HCT116 (cell line): ENCODE measurements at regions of chr3 and their contacts with region 1.

Region 1: GRCh38 chr3:54146506-54147239 is 24.3 kb downstream of the CACNA2D3 start:
- DNase-seq: peak; percentile 4
- ATAC-seq: peak; percentile 99
- H3K4me3 ChIP-seq: no peak overlapping the region
- H3K27ac ChIP-seq: no peak overlapping the region
- H3K4me1 ChIP-seq: no peaks in the 10 kb centered on the region
- H3K27me3 ChIP-seq: peaks cover 28% of the 10 kb centered on the region
- CTCF ChIP-seq: peak; percentile 36 to 70 (median 66); a peak in 4 of 6 replicates
- POLR2A ChIP-seq: no peak
- RAD21 ChIP-seq: peak; percentile 77

Region 2: GRCh38 chr3:54294214-54294613 is 147.5 kb after region 1 on chr3:
- CTCF ChIA-PET with region 1: interaction called, 5 read pairs
- POLR2A ChIA-PET with region 1: no interaction called
- RAD21 ChIA-PET with region 1: no interaction called
- intact Hi-C with region 1: loop called (anchors 1 kb)
- DNase-seq: no peak
- ATAC-seq: no peak
- H3K4me3 ChIP-seq: no peak overlapping the region
- H3K27ac ChIP-seq: no peak overlapping the region
- H3K4me1 ChIP-seq: no peaks in the 10 kb centered on the region
- H3K27me3 ChIP-seq: peaks cover 33% of the 10 kb centered on the region
- CTCF ChIP-seq: peak in 1 of 3 experiments; percentile 32; a peak in 1 of 6 replicates
- POLR2A ChIP-seq: no peak
- RAD21 ChIP-seq: no peak

Region 3: DNA sequence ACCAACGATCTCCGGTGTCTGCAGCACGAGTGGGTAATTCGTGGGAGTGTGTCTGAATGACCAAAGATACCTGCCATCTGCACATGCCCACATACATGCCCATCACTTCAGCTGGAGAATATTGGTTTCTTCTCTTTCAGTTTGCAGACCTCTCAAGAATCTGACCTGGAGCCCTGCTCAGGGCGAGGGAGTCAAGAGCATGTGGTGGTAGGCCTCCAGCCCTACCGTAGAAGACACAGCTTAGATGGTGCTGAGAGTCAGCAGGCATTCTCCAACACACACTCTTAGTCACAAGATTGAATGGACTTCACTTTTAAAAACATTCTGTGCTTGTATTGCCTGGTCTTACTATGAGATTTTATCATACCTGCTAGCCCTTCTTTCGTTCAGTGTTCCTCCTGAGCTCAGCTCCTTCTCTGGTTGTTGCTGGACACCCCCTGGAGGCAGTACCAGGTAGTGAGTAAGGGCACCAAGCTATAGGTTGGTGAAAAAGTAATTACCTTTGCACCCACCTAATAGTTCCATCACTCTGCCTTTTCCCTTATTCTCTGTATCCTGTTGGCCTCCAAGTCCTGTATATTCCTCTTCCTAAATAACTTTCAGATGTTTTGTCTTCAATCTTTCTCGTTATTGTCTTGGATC is 227.7 kb after region 1 on chr3:
- CTCF ChIA-PET with region 1: interaction called, 19 read pairs
- POLR2A ChIA-PET with region 1: no interaction called
- RAD21 ChIA-PET with region 1: no interaction called
- intact Hi-C with region 1: loop called (anchors 1 kb)
- DNase-seq: no peak
- ATAC-seq: peak; percentile 77
- H3K4me3 ChIP-seq: no peak overlapping the region
- H3K27ac ChIP-seq: no peak overlapping the region
- H3K4me1 ChIP-seq: no peaks in the 10 kb centered on the region
- H3K27me3 ChIP-seq: 0 out of 2 replicates have a peak, but pooled peaks cover 17% of the 10 kb centered on the region
- CTCF ChIP-seq: peak; percentile 27 to 60 (median 54); a peak in 5 of 6 replicates
- POLR2A ChIP-seq: no peak
- RAD21 ChIP-seq: peak; percentile 63